ENCODE measurements at regions of chr15 and their contacts with region 1.

Region 1: DNA sequence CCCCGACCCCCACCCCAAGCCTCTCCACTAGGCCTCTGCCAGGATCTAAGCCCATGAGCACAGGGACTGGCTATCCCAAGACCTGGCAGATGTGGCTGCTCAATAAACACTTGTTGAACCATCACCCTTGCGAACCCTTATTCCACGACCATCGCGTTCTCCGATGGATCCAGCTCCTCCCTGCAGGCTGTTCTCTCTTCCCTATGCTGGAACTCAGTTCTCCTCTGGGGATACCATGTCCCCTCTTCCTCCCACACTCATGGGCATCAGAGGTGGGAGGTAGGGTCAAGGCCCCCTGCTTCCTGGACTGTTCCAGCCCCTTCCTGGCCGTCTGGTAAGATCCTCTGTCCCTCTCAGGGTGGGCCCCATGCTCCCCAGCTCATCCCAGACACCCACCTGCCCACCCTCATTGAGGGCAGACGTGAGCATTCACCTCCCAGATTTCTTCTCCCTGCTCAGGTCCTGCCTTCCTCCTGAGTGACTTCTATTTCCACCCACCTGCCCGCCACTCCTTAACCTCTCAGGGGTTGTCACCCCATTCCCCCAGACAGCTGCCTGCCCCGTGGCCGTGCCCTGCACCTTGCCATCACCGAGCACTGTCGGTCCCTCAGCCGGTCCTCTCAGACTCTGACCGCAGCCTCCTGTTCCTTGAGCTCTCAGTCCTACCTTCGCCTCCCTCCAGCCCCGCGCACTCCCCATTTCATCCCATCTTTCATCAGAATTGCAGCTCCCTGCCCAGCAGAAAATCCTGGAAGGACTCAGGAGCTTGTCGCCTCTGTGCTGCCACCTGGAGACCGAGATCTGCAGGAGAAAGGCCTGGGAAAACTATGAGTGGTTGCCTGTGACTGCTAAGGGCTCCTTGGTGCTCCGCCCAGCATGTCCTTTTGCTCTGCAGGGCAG is 42.0 kb downstream of the PML start:
- DNase-seq: peak; percentile 20
- H3K4me3 ChIP-seq: no peak overlapping the region
- H3K27ac ChIP-seq: no peak overlapping the region
- H3K4me1 ChIP-seq: peaks cover 3% of the 10 kb centered on the region
- H3K27me3 ChIP-seq: no peaks in the 10 kb centered on the region
- CTCF ChIP-seq: peak; percentile 33 to 57

Region 2: GRCh38 chr15:73660455-73660854 is 376.1 kb before region 1 on chr15:
- CTCF ChIA-PET with region 1: no interaction called
- dilution Hi-C with region 1: no loop called
- in situ Hi-C with region 1: no loop called
- intact Hi-C with region 1: no loop called
- DNase-seq: no peak
- H3K4me3 ChIP-seq: no peak overlapping the region
- H3K27ac ChIP-seq: no peak overlapping the region
- H3K4me1 ChIP-seq: no peaks in the 10 kb centered on the region
- H3K27me3 ChIP-seq: peaks cover 2% of the 10 kb centered on the region
- CTCF ChIP-seq: no peak

Region 3: GRCh38 chr15:73950831-73951561 is 85.5 kb before region 1 on chr15:
- CTCF ChIA-PET with region 1: no interaction called
- dilution Hi-C with region 1: loop called (anchors 5 kb)
- in situ Hi-C with region 1: no loop called
- intact Hi-C with region 1: loop called (anchors 1 kb)
- DNase-seq: peak; percentile 78
- H3K4me3 ChIP-seq: no peak overlapping the region
- H3K27ac ChIP-seq: peak overlapping the region; percentile 11
- H3K4me1 ChIP-seq: peaks cover 14% of the 10 kb centered on the region
- H3K27me3 ChIP-seq: no peaks in the 10 kb centered on the region
- CTCF ChIP-seq: peak; percentile 65 to 82

Region 4: DNA sequence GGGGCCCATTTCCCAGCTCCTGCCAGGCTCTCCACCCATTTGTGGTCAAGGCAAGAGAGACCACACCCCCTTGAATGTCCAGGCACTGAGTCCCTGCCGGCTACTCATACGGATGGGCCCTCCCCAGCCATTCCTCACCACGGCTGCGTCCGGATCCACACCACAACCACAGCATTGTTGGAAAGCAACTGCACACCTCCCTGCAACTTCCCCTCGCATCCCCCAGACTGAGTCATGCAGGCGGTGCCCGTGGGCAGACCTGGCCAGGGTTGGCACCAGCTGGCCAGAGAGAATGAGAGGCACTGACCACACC is 79.8 kb before region 1 on chr15:
- CTCF ChIA-PET with region 1: no interaction called
- dilution Hi-C with region 1: loop called (anchors 5 kb)
- in situ Hi-C with region 1: no loop called
- intact Hi-C with region 1: loop called (anchors 1 kb)
- DNase-seq: peak; percentile 97
- H3K4me3 ChIP-seq: no peak overlapping the region
- H3K27ac ChIP-seq: peak overlapping the region; percentile 80
- H3K4me1 ChIP-seq: peaks cover 41% of the 10 kb centered on the region
- H3K27me3 ChIP-seq: no peaks in the 10 kb centered on the region
- CTCF ChIP-seq: no peak

Measured in mammary epithelial cell (primary cell).